CD4-positive, alpha-beta memory T cell (primary cell): ENCODE measurements at regions of chr19 and their contacts with region 1.

Region 1: DNA sequence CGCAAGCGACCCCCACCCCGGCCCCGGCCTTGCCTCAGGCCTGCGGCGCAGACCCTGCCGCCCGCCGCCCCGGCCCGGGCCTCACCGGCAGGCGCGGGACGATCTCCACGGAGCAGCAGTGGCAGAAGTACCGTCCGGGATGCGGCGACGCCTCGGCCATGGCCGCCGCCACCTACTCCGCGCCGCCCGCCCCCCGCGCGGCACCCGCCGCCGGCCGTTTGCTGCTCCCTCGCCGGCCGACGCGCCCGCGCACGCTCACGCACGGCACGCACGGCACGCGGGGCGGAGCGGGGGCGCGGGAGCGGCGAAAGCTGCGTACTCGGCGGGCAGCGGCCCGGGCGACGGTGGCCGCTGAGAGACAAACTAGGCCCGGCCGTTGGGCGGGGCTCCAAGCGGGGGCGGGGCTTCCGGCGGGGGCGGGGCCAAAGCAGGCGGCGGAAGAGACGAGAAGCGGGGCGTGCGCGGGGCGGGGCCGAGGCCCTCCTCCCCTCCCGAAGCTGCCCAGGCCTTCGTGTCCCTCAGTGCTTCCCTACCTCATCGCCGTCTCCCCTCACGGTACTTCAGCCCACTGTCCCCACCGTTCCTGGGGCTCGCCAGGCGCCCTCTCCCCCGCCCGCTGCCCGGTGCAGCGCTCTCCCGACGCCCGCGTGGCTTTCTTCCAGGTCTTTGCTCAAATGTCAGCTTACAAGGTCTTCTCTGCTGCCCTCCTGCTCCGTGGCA is at the start of gene RNF126:
- DNase-seq: peak; percentile 86 to 90 (median 89)
- H3K4me3 ChIP-seq: peak within 1 kb of the TSS; percentile 83 to 99
- H3K4me3 Mint-ChIP-seq: peak within 1 kb of the TSS; percentile 94 to 100 (median 98)
- H3K27ac ChIP-seq: peak within 1 kb of the TSS; percentile 96
- H3K27ac Mint-ChIP-seq: peak within 1 kb of the TSS; percentile 97 to 100 (median 99)
- H3K4me1 ChIP-seq: peaks cover 46% of the 10 kb centered on the region
- H3K4me1 Mint-ChIP-seq: peaks cover 7 to 53% (median 34%) of the 10 kb centered on the region in 4 donors
- H3K27me3 ChIP-seq: no peaks in the 10 kb centered on the region
- H3K27me3 Mint-ChIP-seq: peaks cover 0 to 3% of the 10 kb centered on the region in 2 donors
- total RNA-seq, gene RNF126: 105 to 112 TPM

Region 2: GRCh38 chr19:572140-572742 is 90.9 kb before region 1 on chr19 and contains the start of gene BSG:
- CTCF ChIA-PET with region 1: no interaction called
- POLR2A ChIA-PET with region 1: interaction called, 6 read pairs
- intact Hi-C with region 1: loop called (anchors 1 kb)
- DNase-seq: peak; percentile 98 to 99 (median 99)
- H3K4me3 ChIP-seq: peak within 1 kb of the TSS; percentile 75 to 81
- H3K4me3 Mint-ChIP-seq: peak within 1 kb of the TSS; percentile 95 to 99 (median 98)
- H3K27ac ChIP-seq: peak within 1 kb of the TSS; percentile 70
- H3K27ac Mint-ChIP-seq: peak within 1 kb of the TSS; percentile 96 to 100 (median 98)
- H3K4me1 ChIP-seq: peaks cover 46% of the 10 kb centered on the region
- H3K4me1 Mint-ChIP-seq: peaks cover 18 to 49% (median 35%) of the 10 kb centered on the region in 4 donors
- H3K27me3 ChIP-seq: no peaks in the 10 kb centered on the region
- H3K27me3 Mint-ChIP-seq: no peaks in the 10 kb centered on the region
- total RNA-seq, gene BSG: 150 to 151 TPM

Region 3: GRCh38 chr19:633068-633785 is 29.9 kb before region 1 on chr19 and contains the start of gene POLRMT:
- CTCF ChIA-PET with region 1: interaction called, 4 read pairs
- POLR2A ChIA-PET with region 1: interaction called, 54 read pairs
- intact Hi-C with region 1: loop called (anchors 1 kb)
- DNase-seq: peak; percentile 94 to 96 (median 96)
- H3K4me3 ChIP-seq: peak within 1 kb of the TSS; percentile 61 to 86
- H3K4me3 Mint-ChIP-seq: peak within 1 kb of the TSS; percentile 90 to 98 (median 96)
- H3K27ac ChIP-seq: peak within 1 kb of the TSS; percentile 71
- H3K27ac Mint-ChIP-seq: peak within 1 kb of the TSS; percentile 94 to 98 (median 97)
- H3K4me1 ChIP-seq: peaks cover 22% of the 10 kb centered on the region
- H3K4me1 Mint-ChIP-seq: peaks cover 2 to 49% (median 24%) of the 10 kb centered on the region in 4 donors
- H3K27me3 ChIP-seq: no peaks in the 10 kb centered on the region
- H3K27me3 Mint-ChIP-seq: no peaks in the 10 kb centered on the region
- total RNA-seq, gene POLRMT: 98.9 to 103 TPM

Region 4: DNA sequence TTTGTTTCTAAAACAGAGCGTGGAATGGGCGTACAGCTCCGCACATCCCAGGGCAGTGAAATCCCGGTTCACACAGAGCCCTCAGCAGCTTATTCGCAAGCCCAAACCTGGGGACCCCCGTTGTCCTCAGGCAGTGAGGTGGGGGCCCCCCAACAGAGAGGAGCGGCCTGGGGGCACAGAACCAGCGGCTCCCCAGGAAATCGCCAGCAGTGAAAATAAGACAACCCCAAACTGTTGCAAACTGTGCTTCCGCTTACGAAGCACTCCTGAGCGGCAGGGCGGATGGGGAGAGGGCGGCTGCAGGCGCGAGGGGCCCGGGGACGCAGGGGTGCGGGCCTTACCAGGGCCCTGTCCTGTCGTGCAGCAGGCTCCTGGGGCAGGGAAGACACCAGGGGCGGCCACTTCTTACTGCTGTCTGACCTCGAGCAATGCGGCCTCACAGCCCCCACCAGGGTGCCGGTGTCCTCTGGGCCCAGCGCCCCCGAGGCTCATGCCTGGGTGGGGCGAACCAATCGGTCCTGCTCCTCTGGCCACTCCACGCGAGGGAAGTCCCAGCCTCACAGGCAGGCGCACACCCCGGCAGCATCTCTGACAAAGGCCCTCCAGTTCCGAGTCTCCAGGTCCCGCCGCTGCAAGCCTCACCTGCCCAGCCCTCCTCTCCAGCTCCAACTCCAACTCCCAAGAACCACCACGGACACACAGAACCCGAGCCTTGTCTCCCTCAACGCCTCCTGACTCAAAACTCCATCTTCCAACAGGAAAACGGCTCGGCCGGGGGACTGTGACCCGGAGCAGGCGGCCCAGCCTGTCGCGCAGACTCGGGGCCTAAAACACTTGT is 17.3 kb before region 1 on chr19:
- CTCF ChIA-PET with region 1: no interaction called
- POLR2A ChIA-PET with region 1: interaction called, 13 read pairs
- intact Hi-C with region 1: no loop called
- DNase-seq: no peak
- H3K4me3 ChIP-seq: no peak overlapping the region
- H3K4me3 Mint-ChIP-seq: no peak overlapping the region
- H3K27ac ChIP-seq: no peak overlapping the region
- H3K27ac Mint-ChIP-seq: peak overlapping the region in 1 of 7 donors; percentile 46
- H3K4me1 ChIP-seq: no peaks in the 10 kb centered on the region
- H3K4me1 Mint-ChIP-seq: peaks cover 0 to 3% (median 0%) of the 10 kb centered on the region in 4 donors
- H3K27me3 ChIP-seq: no peaks in the 10 kb centered on the region
- H3K27me3 Mint-ChIP-seq: no peaks in the 10 kb centered on the region

Region 5: DNA sequence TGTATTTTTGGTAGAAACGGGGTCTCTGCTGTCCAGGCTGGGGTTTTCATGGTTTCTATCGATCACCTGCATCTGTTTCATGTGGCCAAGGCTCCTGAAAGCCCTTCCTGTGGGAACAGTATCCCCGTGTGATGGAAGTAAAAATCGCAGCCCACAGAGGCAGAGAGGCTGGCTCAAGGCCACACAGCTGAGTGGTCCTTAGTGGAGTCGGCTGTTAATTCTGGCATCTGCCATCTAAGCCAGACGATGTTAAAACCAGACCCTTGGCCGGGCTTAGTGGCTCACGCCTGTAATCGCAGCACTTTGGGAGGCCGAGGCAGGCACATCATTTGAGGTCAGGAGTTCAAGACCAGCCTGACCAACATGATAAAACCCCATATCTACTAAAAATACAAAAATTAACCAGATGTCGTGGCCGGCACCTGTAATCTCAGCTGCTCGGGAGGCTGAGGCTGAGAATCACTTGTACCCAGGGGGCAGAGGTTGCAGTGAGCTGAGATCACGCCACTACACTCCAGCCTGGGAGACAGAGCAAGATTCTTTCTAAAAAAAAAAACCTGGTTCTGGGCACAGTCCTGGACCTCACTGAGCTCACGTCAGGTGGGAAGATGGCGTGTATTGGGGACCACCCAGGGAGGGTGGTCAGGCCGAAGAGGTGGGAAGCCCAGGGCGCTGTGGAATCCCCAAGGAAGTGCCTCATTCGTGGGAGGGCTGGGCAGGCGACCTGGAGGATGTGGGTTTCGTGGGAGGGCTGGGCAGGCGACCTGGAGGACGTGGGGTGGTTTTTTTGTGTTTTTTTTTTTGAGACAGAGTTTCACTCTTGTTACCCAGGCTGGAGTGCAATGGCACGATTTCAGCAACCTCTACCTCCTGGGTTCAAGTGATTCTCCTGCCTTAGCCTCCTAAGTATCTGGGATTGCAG is 69.3 kb after region 1 on chr19:
- CTCF ChIA-PET with region 1: interaction called, 7 read pairs
- POLR2A ChIA-PET with region 1: interaction called, 4 read pairs
- intact Hi-C with region 1: loop called (anchors 1 kb)
- DNase-seq: no peak
- H3K4me3 ChIP-seq: no peak overlapping the region
- H3K4me3 Mint-ChIP-seq: no peak overlapping the region
- H3K27ac ChIP-seq: no peak overlapping the region
- H3K27ac Mint-ChIP-seq: peak overlapping the region in 2 of 7 donors; percentile 15 to 59
- H3K4me1 ChIP-seq: no peaks in the 10 kb centered on the region
- H3K4me1 Mint-ChIP-seq: peaks cover 7 to 18% (median 10%) of the 10 kb centered on the region in 4 donors
- H3K27me3 ChIP-seq: no peaks in the 10 kb centered on the region
- H3K27me3 Mint-ChIP-seq: peaks cover 0 to 2% of the 10 kb centered on the region in 2 donors